MCF 10A (cell line): ENCODE measurements at regions of chr12 and their contacts with region 1.

Region 1: GRCh38 chr12:120971299-120972179 is 6.8 kb upstream of the HNF1A start:
- DNase-seq: peak; percentile 69
- H3K4me3 Mint-ChIP-seq: no peak overlapping the region
- H3K27ac Mint-ChIP-seq: no peak overlapping the region
- H3K4me1 Mint-ChIP-seq: peaks cover 8% of the 10 kb centered on the region
- H3K27me3 Mint-ChIP-seq: no peaks in the 10 kb centered on the region
- CTCF ChIP-seq: peak; percentile 73

Region 2: GRCh38 chr12:120234643-120235368 is 736.7 kb before region 1 on chr12:
- CTCF ChIA-PET with region 1: no interaction called
- POLR2A ChIA-PET with region 1: no interaction called
- intact Hi-C with region 1: no loop called
- DNase-seq: peak; percentile 92
- H3K4me3 Mint-ChIP-seq: peak overlapping the region; percentile 27
- H3K27ac Mint-ChIP-seq: peak overlapping the region; percentile 79
- H3K4me1 Mint-ChIP-seq: peaks cover 74% of the 10 kb centered on the region
- H3K27me3 Mint-ChIP-seq: no peaks in the 10 kb centered on the region
- CTCF ChIP-seq: peak; percentile 35

Region 3: GRCh38 chr12:120580787-120581723 is 390.5 kb before region 1 on chr12 and contains the start of gene POP5:
- CTCF ChIA-PET with region 1: interaction called, 29 read pairs
- POLR2A ChIA-PET with region 1: interaction called, 6 read pairs
- intact Hi-C with region 1: loop called (anchors 1 kb)
- DNase-seq: peak; percentile 98
- H3K4me3 Mint-ChIP-seq: peak within 1 kb of the TSS; percentile 99
- H3K27ac Mint-ChIP-seq: peak within 1 kb of the TSS; percentile 91
- H3K4me1 Mint-ChIP-seq: peaks cover 16% of the 10 kb centered on the region
- H3K27me3 Mint-ChIP-seq: no peaks in the 10 kb centered on the region
- CTCF ChIP-seq: no peak
- total RNA-seq, gene POP5: 24.3 and 29.9 TPM in 2 replicates

Region 4: GRCh38 chr12:120686690-120687577 is 284.6 kb before region 1 on chr12 and contains the start of gene MLEC:
- CTCF ChIA-PET with region 1: interaction called, 3 read pairs
- POLR2A ChIA-PET with region 1: no interaction called
- intact Hi-C with region 1: loop called (anchors 1 kb)
- DNase-seq: peak; percentile 98
- H3K4me3 Mint-ChIP-seq: peak within 1 kb of the TSS; percentile 87
- H3K27ac Mint-ChIP-seq: peak within 1 kb of the TSS; percentile 86
- H3K4me1 Mint-ChIP-seq: peaks cover 27% of the 10 kb centered on the region
- H3K27me3 Mint-ChIP-seq: no peaks in the 10 kb centered on the region
- CTCF ChIP-seq: no peak
- total RNA-seq, gene MLEC: 107 and 144 TPM in 2 replicates

Region 5: DNA sequence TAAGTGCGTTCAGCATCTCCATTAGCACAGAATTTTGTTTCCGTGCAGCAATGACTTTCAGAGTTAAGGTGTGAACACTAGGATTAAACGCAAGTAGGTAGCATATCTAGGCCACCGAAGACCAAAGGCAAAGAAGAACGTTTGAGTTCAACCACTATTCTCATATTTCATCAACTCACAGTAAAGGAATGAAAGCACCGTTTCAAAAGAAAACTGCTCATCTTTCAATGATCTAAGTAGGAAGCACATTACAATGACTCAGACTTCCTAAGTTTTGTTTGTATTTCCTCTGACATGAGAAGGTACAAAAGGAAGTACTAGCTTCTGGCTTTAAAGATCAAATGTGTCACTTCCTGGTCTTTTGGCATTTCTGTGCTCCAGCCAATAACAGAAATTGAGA is 188.3 kb before region 1 on chr12:
- CTCF ChIA-PET with region 1: interaction called, 11 read pairs
- POLR2A ChIA-PET with region 1: no interaction called
- intact Hi-C with region 1: no loop called
- DNase-seq: peak; percentile 52
- H3K4me3 Mint-ChIP-seq: no peak overlapping the region
- H3K27ac Mint-ChIP-seq: peak overlapping the region; percentile 32
- H3K4me1 Mint-ChIP-seq: no peaks in the 10 kb centered on the region
- H3K27me3 Mint-ChIP-seq: no peaks in the 10 kb centered on the region
- CTCF ChIP-seq: no peak

Region 6: GRCh38 chr12:120856980-120857379 is 114.6 kb before region 1 on chr12:
- CTCF ChIA-PET with region 1: interaction called, 7 read pairs
- POLR2A ChIA-PET with region 1: interaction called, 4 read pairs
- intact Hi-C with region 1: loop called (anchors 1 kb)
- DNase-seq: peak; percentile 50
- H3K4me3 Mint-ChIP-seq: no peak overlapping the region
- H3K27ac Mint-ChIP-seq: no peak overlapping the region
- H3K4me1 Mint-ChIP-seq: peaks cover 22% of the 10 kb centered on the region
- H3K27me3 Mint-ChIP-seq: no peaks in the 10 kb centered on the region
- CTCF ChIP-seq: peak; percentile 29

Region 7: GRCh38 chr12:121005346-121005815 is 33.8 kb after region 1 on chr12:
- CTCF ChIA-PET with region 1: interaction called, 10 read pairs
- POLR2A ChIA-PET with region 1: no interaction called
- intact Hi-C with region 1: no loop called
- DNase-seq: peak; percentile 53
- H3K4me3 Mint-ChIP-seq: no peak overlapping the region
- H3K27ac Mint-ChIP-seq: no peak overlapping the region
- H3K4me1 Mint-ChIP-seq: no peaks in the 10 kb centered on the region
- H3K27me3 Mint-ChIP-seq: no peaks in the 10 kb centered on the region
- CTCF ChIP-seq: peak; percentile 79